Activated CD4-positive, alpha-beta T cell treated with anti-CD3 and anti-CD28 coated beads for 36 hours (primary cell): ENCODE measurements at regions of chr5 and their contacts with region 1.

Region 1: DNA sequence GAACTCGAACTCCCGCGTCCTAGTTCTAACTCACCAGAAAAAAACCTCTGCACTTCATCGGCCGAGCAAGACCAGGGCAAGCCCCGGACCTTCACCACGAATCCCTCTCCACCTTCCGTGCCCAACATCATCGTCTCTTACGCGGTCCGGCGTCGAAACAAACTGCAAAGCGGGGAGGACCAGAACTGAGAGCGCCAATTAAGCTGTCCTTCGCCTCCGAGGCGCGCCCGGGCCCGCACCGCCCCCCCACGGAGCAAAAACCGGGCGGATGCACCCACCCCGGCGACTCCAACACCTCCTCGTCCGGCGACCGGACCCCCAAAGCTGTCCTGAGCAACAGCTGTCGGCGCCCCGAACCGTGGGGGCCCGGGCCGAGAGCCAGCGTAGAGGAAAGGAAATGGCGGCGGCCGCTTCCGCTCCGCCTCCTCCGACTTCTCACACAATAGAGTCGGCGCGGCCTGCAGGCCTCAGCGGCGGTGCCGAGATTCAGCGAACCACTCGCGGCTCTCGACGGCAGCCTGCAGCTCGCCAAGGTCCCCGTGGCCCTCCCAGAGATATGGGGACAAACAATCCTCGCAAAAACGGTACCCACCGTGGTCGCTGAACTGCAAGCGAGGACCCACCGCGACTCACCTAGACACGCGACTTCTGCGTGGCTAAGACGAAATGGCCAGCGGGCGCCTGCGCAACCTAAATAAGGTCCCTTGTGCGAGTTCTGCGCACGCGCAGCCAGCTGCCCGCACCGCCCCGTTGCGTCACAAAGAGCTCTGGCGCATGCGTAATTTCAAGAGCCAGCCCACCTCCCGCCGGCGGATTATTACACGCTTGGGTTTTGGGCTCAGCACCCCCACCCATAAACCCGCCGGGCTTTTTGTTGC is at the start of gene HNRNPH1:
- DNase-seq: peak; percentile 99
- ATAC-seq: peak; percentile 79
- H3K4me3 Mint-ChIP-seq: peak within 1 kb of the TSS; percentile 94
- H3K27ac Mint-ChIP-seq: peak within 1 kb of the TSS; percentile 100
- H3K4me1 Mint-ChIP-seq: peaks cover 37% of the 10 kb centered on the region
- H3K27me3 Mint-ChIP-seq: no peaks in the 10 kb centered on the region
- total RNA-seq, gene HNRNPH1: 634 to 659 TPM

Region 2: GRCh38 chr5:178732281-178732680 is 891.0 kb before region 1 on chr5:
- CTCF ChIA-PET with region 1: no interaction called
- POLR2A ChIA-PET with region 1: no interaction called
- intact Hi-C with region 1: loop called in 1 of 2 experiments (anchors 1 kb)
- DNase-seq: no peak
- ATAC-seq: no peak
- H3K4me3 Mint-ChIP-seq: no peak overlapping the region
- H3K27ac Mint-ChIP-seq: no peak overlapping the region
- H3K4me1 Mint-ChIP-seq: peaks cover 10% of the 10 kb centered on the region
- H3K27me3 Mint-ChIP-seq: no peaks in the 10 kb centered on the region

Region 3: DNA sequence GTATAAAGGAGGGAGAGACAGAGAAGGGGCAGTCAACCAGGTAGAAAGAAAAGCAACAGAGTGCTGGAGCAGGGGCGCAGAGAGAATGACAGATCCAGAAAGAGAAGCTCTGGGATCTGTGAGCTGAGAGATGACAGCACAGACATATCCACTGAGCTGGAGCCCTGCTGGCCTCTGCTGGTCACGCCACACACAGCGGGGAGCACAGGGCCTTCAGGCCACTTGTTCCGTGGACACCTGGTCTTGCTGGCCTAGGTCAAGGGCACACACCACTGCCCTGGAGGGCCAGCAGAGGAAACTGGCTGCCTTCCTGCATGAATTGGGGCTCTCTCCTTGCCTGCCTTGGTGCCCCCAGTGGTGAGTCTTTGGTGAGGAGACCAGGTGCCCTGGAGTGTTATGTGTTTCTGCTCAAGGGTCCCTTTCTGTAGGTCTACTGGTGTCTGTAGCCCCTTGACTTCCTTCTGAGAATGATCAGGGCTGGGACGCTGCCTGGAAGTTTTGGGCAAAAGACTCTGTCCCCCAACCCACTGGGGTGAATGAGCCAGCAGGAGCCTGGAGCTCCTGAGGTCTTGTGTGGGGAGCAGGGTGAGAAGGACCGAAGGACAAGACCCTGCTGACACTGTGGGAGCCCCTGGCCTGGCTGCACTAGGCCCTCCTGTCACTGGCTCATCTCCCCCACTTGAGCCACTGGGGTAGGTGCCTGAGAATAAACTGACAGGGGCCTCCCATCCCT is 218.8 kb before region 1 on chr5:
- CTCF ChIA-PET with region 1: no interaction called
- POLR2A ChIA-PET with region 1: no interaction called
- intact Hi-C with region 1: no loop called
- DNase-seq: no peak
- ATAC-seq: no peak
- H3K4me3 Mint-ChIP-seq: no peak overlapping the region
- H3K27ac Mint-ChIP-seq: no peak overlapping the region
- H3K4me1 Mint-ChIP-seq: no peaks in the 10 kb centered on the region
- H3K27me3 Mint-ChIP-seq: no peaks in the 10 kb centered on the region

Region 4: DNA sequence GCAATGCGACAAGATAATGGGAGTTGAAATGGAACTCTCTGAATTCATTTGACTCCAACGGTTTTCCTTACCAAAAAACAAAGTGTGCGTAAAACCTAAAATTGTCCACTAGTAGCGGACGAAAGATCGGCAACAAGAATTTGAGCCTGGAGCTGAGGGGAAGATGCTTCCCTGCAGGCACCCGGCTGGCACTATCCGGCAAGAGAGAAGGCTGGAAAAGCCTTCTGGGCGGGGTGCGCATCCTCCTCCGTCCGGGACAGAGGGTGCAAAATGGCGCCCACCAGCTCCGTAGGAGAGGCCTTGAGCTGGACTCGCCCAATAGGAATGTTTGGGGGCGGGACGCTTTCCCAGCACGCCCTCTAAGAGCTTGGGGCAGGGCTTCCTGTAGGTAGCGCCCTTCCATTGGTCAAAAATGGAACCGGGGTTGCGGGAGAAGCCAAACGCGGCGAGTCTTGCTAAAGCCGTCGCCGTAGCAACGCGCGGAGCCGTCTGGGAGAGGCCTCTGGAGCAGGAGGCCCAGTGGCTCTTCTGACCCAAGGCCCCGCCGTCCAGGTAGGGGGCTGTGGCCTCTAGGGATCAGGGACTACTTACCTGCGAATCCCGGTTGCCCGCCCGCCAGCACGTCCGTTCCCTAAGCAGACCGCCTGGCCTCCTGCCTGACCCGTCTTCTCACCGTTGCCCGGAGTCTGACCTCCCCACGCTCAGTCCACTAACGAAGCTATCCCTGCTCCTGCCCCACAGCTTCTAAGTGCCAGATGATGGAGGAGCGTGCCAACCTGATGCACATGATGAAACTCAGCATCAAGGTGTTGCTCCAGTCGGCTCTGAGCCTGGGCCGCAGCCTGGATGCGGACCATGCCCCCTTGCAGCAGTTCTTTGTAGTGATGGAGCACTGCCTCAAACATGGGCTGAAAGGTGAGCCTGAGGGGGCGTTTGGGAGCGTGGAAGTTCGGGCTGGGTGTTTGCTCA is 63.7 kb before region 1 on chr5:
- CTCF ChIA-PET with region 1: interaction called, 3 read pairs
- POLR2A ChIA-PET with region 1: interaction called, 8 read pairs
- intact Hi-C with region 1: loop called (anchors 1 to 5 kb)
- DNase-seq: peak; percentile 97
- ATAC-seq: peak; percentile 100
- H3K4me3 Mint-ChIP-seq: peak overlapping the region; percentile 82
- H3K27ac Mint-ChIP-seq: peak overlapping the region; percentile 80
- H3K4me1 Mint-ChIP-seq: peaks cover 17% of the 10 kb centered on the region
- H3K27me3 Mint-ChIP-seq: no peaks in the 10 kb centered on the region

Region 5: DNA sequence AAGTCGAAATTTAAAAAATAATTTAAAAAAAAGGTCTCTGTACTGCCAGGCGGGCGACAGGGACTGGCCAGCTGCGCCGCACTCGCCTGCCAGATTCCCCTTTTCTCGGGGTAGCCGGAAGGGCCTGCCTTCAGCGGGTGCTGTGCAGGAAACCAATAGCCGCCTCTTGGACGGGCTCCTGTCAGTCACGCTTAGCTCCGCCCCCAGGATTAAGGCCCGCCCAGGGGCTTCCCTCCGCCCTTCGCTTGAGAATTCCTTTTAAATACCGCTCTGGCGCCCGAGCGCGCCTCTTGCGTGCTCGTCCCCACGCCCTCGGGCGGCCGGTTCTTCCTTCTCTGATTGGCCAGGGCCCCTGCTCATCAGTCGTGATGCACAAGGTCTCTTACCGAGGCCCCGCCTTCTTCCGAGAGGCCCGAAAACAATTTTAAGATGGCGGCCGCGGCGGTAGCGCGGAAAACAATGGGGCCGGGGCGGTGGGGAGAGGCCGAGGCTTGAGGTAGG is 109.2 kb after region 1 on chr5 and contains the start of gene MAML1:
- CTCF ChIA-PET with region 1: interaction called, 5 read pairs
- POLR2A ChIA-PET with region 1: interaction called, 13 read pairs
- intact Hi-C with region 1: loop called (anchors 1 kb)
- DNase-seq: peak; percentile 99
- ATAC-seq: peak; percentile 95
- H3K4me3 Mint-ChIP-seq: peak within 1 kb of the TSS; percentile 92
- H3K27ac Mint-ChIP-seq: peak within 1 kb of the TSS; percentile 94
- H3K4me1 Mint-ChIP-seq: peaks cover 43% of the 10 kb centered on the region
- H3K27me3 Mint-ChIP-seq: no peaks in the 10 kb centered on the region
- total RNA-seq, gene MAML1: 25.4 to 32.6 TPM

Region 6: DNA sequence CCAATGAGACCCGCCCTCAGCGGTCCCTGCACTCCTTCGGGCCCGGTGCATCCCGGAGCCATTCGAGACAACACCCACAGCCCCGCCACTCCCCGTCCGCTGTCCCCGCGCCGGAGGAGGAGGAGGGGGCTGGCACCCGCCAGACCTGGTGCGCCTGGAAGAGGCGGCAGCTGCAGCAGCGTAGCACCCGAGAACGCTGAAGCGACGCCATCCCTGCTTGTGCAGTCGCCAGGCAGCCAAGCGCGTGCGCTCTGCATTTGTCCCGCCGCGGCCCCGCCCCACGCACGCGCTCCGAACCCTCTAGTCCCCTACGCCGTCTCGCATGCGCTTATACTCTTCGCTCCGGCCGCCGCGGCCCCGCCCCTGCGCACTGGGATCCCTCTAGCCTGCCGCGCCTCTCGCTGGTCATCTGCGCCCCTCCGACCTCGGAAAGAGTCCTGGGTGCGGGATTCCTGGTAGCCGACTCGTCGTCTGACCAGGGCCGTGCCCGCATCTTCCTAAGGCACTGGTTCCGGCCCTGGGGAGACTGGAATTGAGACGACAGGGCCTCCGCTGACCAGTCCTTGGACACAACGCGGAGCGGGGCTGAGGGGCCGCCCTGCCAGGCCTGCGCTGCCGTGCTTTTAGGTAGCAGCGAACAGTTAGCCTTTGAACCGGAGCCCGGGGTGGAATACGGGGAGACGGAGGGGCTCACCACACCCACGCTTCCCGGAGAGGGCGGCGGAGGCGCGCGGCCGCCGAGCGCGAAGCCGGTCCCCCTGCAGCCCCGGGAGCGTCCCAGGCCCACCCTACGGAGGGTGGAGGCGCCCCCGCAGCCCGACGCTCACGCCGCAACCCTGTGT is 235.6 kb after region 1 on chr5 and contains the start of gene MRNIP:
- CTCF ChIA-PET with region 1: no interaction called
- POLR2A ChIA-PET with region 1: no interaction called
- intact Hi-C with region 1: loop called in 1 of 2 experiments (anchors 1 kb)
- DNase-seq: peak; percentile 95
- ATAC-seq: peak; percentile 98
- H3K4me3 Mint-ChIP-seq: peak within 1 kb of the TSS; percentile 84
- H3K27ac Mint-ChIP-seq: peak within 1 kb of the TSS; percentile 85
- H3K4me1 Mint-ChIP-seq: peaks cover 6% of the 10 kb centered on the region
- H3K27me3 Mint-ChIP-seq: no peaks in the 10 kb centered on the region
- total RNA-seq, gene MRNIP: 19.4 to 19.7 TPM

Region 7: GRCh38 chr5:181243512-181244343 is 1620.5 kb after region 1 on chr5 and contains the start of gene RACK1:
- CTCF ChIA-PET with region 1: no interaction called
- POLR2A ChIA-PET with region 1: no interaction called
- intact Hi-C with region 1: loop called in 1 of 2 experiments (anchors 10 kb)
- DNase-seq: peak; percentile 94
- ATAC-seq: peak; percentile 70
- H3K4me3 Mint-ChIP-seq: peak within 1 kb of the TSS; percentile 91
- H3K27ac Mint-ChIP-seq: peak within 1 kb of the TSS; percentile 99
- H3K4me1 Mint-ChIP-seq: peaks cover 50% of the 10 kb centered on the region
- H3K27me3 Mint-ChIP-seq: no peaks in the 10 kb centered on the region
- total RNA-seq, gene RACK1: 2,724 to 3,901 TPM